ENCODE measurements at regions of chr10 and their contacts with region 1.

Region 1: DNA sequence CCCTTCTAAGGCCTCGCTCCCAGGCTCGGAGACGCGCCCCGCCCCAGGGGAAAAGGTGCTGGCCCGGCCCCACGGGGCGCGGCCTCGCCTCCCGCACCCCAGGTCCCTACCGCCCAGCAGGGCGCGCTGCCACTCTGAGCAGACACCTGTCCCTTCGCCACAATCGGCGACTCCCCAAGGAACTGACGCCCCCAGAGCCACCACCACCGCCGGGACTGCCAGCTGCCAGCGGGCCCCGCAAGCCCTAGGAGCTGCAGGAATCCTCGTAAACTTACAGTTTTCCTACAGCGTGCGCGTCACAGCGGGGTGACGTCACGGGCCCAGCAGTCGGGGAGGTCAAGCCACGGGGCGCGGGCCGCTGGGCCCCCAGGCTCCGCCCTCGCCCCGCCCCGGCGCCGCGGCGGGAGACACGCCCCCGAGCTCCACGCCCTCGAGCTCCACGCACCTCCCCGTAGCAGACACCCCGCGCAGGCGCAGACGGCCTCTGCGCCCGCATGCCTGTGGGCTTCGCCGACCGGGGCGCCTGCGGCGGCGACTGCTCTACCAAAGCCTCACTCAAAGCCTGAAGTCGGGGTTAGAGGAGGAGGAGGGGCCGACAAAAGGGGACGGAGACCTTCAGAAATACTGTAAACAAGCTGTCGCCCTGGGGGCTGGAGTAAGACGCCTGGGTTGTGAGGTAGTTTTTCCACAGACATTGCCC is at the start of gene ZNF438:
- DNase-seq: peak; percentile 93 to 97
- ATAC-seq: peak; percentile 95 to 99 (median 96)
- H3K4me3 ChIP-seq: peak within 1 kb of the TSS; percentile 26 to 82 (median 62)
- H3K27ac ChIP-seq: peak within 1 kb of the TSS; percentile 97 to 100 (median 99)
- H3K4me1 ChIP-seq: peaks cover 0 to 58% (median 45%) of the 10 kb centered on the region in 9 donors
- H3K27me3 ChIP-seq: no peaks in the 10 kb centered on the region
- CTCF ChIP-seq: peak; percentile 41 to 86 (median 66)
- total RNA-seq, gene ZNF438: 9.3 to 16.1 (median 12.4) TPM

Region 2: GRCh38 chr10:30857803-30858202 is 173.9 kb before region 1 on chr10:
- intact Hi-C with region 1: loop called in 1 of 10 experiments (anchors 5 kb)
- DNase-seq: peak; percentile 59 to 73
- ATAC-seq: peak; percentile 85 to 94 (median 91)
- H3K4me3 ChIP-seq: no peak overlapping the region
- H3K27ac ChIP-seq: peak overlapping the region; percentile 11 to 81 (median 69)
- H3K4me1 ChIP-seq: peaks cover 7 to 69% (median 31%) of the 10 kb centered on the region in 9 donors
- H3K27me3 ChIP-seq: no peaks in the 10 kb centered on the region
- CTCF ChIP-seq: no peak

Region 3: GRCh38 chr10:30988831-30989435 is 42.8 kb before region 1 on chr10:
- intact Hi-C with region 1: loop called in 1 of 10 experiments (anchors 2 kb)
- DNase-seq: no peak
- ATAC-seq: peak; percentile 22 to 84 (median 75)
- H3K4me3 ChIP-seq: peak overlapping the region in 1 of 10 donors; percentile 1
- H3K27ac ChIP-seq: peak overlapping the region in 9 of 10 donors; percentile 33 to 84 (median 67)
- H3K4me1 ChIP-seq: peaks cover 0 to 83% (median 60%) of the 10 kb centered on the region in 9 donors
- H3K27me3 ChIP-seq: no peaks in the 10 kb centered on the region
- CTCF ChIP-seq: no peak

Region 4: DNA sequence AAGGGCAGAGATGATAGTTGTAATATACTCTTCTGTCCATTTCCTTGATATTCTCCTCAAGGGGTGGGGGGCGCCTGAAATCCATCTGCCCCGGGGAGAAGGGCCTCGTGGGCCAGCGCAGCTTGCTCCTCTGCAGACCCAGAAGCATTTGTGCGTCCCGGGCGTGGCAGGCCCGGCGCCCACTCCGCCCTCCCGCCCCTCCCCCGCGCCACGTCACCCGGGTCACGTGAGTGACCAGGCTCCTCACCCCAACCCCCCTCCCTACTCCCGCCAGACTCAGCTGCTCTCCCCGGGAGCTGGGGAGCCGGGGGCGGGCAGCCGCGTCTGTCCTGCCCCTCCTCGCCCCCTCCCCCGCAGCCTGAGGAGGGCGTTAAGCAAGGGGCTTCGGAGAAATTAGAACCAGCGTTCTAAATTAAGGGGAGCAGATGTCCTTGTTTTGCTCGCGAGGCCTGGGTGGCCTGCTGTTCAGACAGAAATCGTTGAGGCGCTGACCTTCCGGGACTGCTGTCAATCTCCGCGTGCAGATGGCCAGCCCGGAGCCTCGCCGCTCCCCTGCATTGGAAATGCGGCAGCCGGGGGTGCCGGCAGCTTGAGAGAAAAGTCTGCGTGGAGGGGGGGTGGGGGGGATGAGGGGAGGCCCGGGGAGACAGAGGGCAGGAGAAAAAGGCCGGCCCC is 102.1 kb after region 1 on chr10:
- intact Hi-C with region 1: loop called in 2 of 10 experiments (anchors 5 to 10 kb)
- DNase-seq: peak; percentile 89 to 90
- ATAC-seq: peak; percentile 91 to 96 (median 94)
- H3K4me3 ChIP-seq: peak overlapping the region; percentile 11 to 58 (median 51)
- H3K27ac ChIP-seq: peak overlapping the region; percentile 65 to 93 (median 90)
- H3K4me1 ChIP-seq: peaks cover 6 to 38% (median 29%) of the 10 kb centered on the region in 9 donors
- H3K27me3 ChIP-seq: no peaks in the 10 kb centered on the region
- CTCF ChIP-seq: no peak

Region 5: DNA sequence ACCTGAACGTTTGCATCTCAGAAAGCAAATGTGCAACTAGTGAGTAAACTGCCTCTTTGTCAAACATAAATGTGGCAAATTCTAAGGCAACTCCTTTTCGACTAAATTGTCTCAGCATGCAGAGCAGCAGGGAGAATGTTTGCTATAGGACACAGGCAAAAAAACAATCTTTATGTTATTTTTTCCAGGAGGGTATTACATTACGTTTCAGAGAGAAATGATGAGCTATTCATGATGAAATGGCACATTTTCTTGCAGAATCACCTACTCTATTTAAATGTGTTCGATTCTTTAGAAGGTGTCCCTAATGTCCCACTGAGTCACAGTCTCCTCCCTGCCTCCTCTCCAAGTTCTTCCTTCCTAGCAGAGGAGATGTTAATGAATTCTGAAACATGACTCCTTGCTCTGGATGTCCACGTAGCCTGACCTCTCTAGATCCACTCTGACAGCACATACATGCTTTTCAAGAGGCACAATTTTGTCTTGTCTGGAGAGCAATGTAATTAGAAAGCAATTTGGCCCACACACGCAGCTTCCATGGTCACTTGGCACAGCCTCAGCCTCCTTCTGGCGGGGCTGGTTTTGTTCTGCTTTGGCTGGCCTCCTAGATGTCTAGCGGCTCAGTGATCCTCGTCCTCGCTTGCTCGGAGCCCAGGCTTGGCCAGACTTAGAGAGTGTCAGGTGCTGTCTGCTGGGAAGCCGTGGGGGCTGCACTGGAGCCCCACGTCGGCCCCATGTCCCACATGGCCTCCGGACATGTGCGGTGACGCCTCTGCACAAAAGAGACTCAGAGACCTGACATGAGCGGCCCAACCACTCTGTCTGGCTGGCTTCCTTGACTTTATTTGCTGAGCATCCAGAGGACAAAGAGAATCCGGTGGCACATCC is 125.7 kb after region 1 on chr10:
- intact Hi-C with region 1: loop called in 1 of 10 experiments (anchors 5 kb)
- DNase-seq: peak; percentile 69 to 85
- ATAC-seq: peak; percentile 87 to 94 (median 92)
- H3K4me3 ChIP-seq: peak overlapping the region in 1 of 10 donors; percentile 22
- H3K27ac ChIP-seq: peak overlapping the region; percentile 67 to 90 (median 78)
- H3K4me1 ChIP-seq: peaks cover 15 to 48% (median 32%) of the 10 kb centered on the region in 9 donors
- H3K27me3 ChIP-seq: no peaks in the 10 kb centered on the region
- CTCF ChIP-seq: no peak

Region 6: DNA sequence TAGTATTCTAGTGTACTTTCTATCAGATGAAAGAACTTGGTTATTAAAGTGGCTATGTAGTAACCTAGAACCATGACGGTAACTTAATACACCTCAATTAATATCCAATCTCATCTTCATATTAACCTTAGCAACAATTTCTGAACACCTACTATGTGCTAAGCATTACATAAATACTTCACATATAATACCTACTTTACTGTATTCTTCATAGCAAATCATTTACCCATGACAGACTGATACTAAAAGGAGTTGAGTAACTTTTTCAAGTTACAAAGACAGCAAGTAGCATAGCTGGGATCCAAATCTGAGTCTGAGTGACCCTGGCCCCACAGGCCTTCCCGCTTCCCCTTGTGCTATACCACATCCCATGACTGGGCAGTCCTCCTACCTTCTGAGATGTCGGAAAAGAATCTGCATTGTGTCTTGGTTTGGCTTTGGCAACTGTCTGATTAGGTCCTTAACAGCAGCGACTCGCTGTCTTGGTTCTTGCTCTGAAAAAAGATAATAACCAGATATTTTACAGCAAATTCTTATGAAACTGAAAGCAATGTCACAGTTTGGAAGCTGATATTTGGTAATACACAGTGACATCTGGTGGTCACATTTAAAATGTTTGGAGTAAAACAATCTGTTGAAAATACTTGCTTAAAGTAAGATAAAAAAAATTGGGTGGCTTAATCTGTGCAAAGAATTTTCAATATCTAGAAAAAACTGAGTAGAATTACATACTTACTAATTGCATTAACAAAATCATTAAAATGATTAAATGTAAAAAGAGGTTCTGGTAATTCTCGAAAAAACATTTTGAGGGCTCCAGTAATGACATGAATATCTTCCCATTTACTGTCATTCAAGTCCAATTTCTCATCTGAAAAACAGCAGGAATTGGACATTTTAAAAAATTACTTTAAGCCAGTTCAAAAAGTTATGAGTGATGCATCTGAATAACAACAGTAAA is 776.8 kb after region 1 on chr10:
- intact Hi-C with region 1: loop called in 2 of 10 experiments (anchors 10 kb)
- DNase-seq: peak in 1 of 2 donors; percentile 39
- ATAC-seq: peak in 7 of 8 donors; percentile 75 to 90 (median 82)
- H3K4me3 ChIP-seq: peak overlapping the region in 9 of 10 donors; percentile 26 to 55 (median 47)
- H3K27ac ChIP-seq: peak overlapping the region; percentile 25 to 86 (median 77)
- H3K4me1 ChIP-seq: peaks cover 0 to 22% (median 11%) of the 10 kb centered on the region in 9 donors
- H3K27me3 ChIP-seq: no peaks in the 10 kb centered on the region
- CTCF ChIP-seq: peak; percentile 38 to 78 (median 66)